Left ventricle myocardium inferior (tissue), 1 donor: ENCODE measurements at regions of chr1 and their contacts with region 1.

Region 1: DNA sequence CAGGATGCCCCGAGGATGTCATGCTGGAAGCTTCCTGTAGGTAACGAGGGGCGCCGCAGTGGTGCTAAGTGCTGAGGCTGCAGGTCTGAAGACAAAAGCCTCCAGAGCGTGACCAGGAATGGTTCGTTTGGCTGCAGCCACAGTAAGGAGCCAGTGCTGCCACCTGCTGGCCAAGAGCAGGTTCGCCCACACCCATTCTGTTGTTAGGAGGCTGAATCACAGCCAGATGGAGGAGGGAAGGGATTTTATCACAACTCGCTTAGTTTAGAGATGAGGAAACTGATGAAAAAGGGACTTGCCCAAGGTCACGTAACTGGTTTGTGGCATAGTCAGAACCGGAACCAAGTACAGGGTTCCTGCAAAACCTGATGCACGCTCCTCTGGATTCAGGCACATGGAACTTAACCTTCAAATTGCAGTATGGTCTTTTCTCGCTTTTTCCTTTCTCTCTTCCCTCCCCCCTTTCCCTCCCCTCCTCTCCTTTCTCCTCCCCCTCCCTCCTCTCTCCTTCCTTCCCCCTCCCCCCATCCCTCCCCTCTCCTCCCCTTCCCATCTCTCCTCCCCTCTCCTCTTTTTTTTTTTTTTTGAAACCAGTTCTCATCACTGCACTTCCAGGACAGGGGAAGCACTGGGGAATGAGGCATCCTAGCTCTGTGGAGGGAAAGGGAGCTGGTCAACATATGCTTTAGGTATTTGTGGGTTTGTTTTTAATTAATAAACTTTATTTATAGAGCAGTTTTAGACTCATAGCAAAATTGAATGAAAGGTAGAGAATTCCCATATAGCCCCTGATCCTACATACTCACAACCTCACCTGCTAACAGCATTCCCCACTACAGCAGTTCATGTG is 81.8 kb downstream of the MPZL1 start:
- DNase-seq: peak; percentile 92
- H3K4me3 ChIP-seq: peak overlapping the region; percentile 29
- H3K27ac ChIP-seq: peak overlapping the region; percentile 5
- H3K4me1 ChIP-seq: peaks cover 6% of the 10 kb centered on the region
- H3K27me3 ChIP-seq: no peaks in the 10 kb centered on the region
- CTCF ChIP-seq: peak; percentile 99

Region 2: DNA sequence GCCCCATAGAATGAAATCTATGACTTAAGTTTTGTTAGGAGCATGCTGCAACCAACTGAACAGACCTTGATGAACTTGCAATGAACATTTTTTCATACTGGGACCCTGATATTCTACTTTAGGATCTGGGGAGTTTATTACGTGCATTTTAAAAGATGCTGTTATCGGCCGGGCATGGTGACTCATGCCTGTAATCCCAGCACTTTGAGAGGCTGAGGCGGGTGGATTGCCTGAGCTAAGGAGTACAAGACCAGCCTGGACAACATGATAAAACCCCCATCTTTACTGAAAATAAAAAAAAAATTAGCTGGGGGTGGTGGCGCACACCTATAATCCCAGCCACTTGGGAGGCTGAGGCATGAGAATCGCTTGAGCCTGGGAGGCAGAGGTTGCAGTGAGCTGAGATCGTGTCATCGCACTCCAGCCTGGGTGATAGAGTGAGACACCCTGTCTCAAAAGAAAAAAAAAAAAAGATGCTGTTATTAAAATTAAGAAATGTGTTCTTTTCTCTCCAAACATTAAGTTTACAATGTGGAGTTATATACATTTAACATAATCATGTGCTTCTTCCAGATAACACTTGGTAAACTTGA is 74.7 kb before region 1 on chr1:
- intact Hi-C with region 1: loop called (anchors 5 kb)
- DNase-seq: no peak
- H3K4me3 ChIP-seq: no peak overlapping the region
- H3K27ac ChIP-seq: no peak overlapping the region
- H3K4me1 ChIP-seq: peaks cover 42% of the 10 kb centered on the region
- H3K27me3 ChIP-seq: no peaks in the 10 kb centered on the region
- CTCF ChIP-seq: no peak

Region 3: GRCh38 chr1:167899253-167899681 is 95.7 kb after region 1 on chr1:
- intact Hi-C with region 1: no loop called
- DNase-seq: peak; percentile 38
- H3K4me3 ChIP-seq: no peak overlapping the region
- H3K27ac ChIP-seq: no peak overlapping the region
- H3K4me1 ChIP-seq: peaks cover 7% of the 10 kb centered on the region
- H3K27me3 ChIP-seq: no peaks in the 10 kb centered on the region
- CTCF ChIP-seq: no peak

Region 4: GRCh38 chr1:167987174-167987573 is 183.6 kb after region 1 on chr1:
- intact Hi-C with region 1: no loop called
- DNase-seq: no peak
- H3K4me3 ChIP-seq: no peak overlapping the region
- H3K27ac ChIP-seq: no peak overlapping the region
- H3K4me1 ChIP-seq: peaks cover 4% of the 10 kb centered on the region
- H3K27me3 ChIP-seq: no peaks in the 10 kb centered on the region
- CTCF ChIP-seq: no peak

Region 5: DNA sequence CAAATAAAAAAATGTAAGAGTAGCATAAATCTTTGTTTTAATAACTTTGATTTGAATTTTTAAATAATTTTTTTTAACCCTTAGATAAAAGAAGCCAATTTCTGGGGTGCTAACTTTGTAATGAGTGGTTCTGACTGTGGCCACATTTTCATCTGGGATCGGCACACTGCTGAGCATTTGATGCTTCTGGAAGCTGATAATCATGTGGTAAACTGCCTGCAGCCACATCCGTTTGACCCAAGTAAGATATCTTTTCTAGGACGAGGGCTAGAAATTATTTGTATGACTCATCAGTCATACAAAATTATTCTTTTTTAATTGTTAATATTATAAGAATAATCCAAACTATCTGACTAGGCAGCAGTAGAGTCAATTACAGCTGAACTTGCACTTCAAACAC is 261.9 kb after region 1 on chr1:
- intact Hi-C with region 1: no loop called
- DNase-seq: no peak
- H3K4me3 ChIP-seq: no peak overlapping the region
- H3K27ac ChIP-seq: no peak overlapping the region
- H3K4me1 ChIP-seq: no peaks in the 10 kb centered on the region
- H3K27me3 ChIP-seq: no peaks in the 10 kb centered on the region
- CTCF ChIP-seq: no peak